Transverse colon (tissue), 4 donors: ENCODE measurements at regions of chrX and their contacts with region 1.

Region 1: GRCh38 chrX:52346512-52347194 is 22.2 kb upstream of the XAGE2 start:
- DNase-seq: no peak
- H3K4me3 ChIP-seq: no peak overlapping the region
- H3K27ac ChIP-seq: no peak overlapping the region
- H3K4me1 ChIP-seq: no peaks in the 10 kb centered on the region
- H3K27me3 ChIP-seq: no peaks in the 10 kb centered on the region
- CTCF ChIP-seq: no peak
- EP300 ChIP-seq: no peak
- POLR2A ChIP-seq: no peak

Region 2: GRCh38 chrX:52220936-52221335 is 125.7 kb before region 1 on chrX:
- in situ Hi-C with region 1: loop called in 1 of 4 experiments (anchors 25 kb)
- intact Hi-C with region 1: no loop called
- DNase-seq: no peak
- H3K4me3 ChIP-seq: no peak overlapping the region
- H3K27ac ChIP-seq: no peak overlapping the region
- H3K4me1 ChIP-seq: no peaks in the 10 kb centered on the region
- H3K27me3 ChIP-seq: no peaks in the 10 kb centered on the region
- CTCF ChIP-seq: no peak
- EP300 ChIP-seq: no peak
- POLR2A ChIP-seq: no peak

Region 3: DNA sequence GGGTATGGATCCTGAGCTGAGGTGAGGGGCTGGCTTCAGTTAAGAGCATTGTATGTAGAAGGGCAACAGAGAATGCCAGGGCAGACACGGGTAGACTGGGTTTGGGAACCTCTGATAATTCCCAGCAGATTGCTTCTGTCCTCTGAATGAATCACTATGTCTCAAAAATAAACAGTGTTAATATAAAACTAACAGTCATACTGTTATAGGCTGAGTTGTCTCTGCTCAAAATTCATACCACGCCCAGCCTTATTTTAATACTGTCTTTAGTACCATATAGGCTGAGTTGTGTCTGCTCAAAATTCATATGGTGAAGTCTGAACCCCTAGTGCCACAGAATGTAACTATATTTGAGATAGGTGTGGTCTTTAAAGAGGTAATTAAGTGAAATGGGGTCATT is 32.2 kb after region 1 on chrX:
- in situ Hi-C with region 1: no loop called
- intact Hi-C with region 1: no loop called
- DNase-seq: no peak
- H3K4me3 ChIP-seq: no peak overlapping the region
- H3K27ac ChIP-seq: no peak overlapping the region
- H3K4me1 ChIP-seq: no peaks in the 10 kb centered on the region
- H3K27me3 ChIP-seq: no peaks in the 10 kb centered on the region
- CTCF ChIP-seq: no peak
- EP300 ChIP-seq: no peak
- POLR2A ChIP-seq: no peak

Region 4: GRCh38 chrX:52608961-52609360 is 262.3 kb after region 1 on chrX:
- in situ Hi-C with region 1: no loop called
- intact Hi-C with region 1: no loop called
- DNase-seq: no peak
- H3K4me3 ChIP-seq: no peak overlapping the region
- H3K27ac ChIP-seq: no peak overlapping the region
- H3K4me1 ChIP-seq: no peaks in the 10 kb centered on the region
- H3K27me3 ChIP-seq: no peaks in the 10 kb centered on the region
- CTCF ChIP-seq: no peak
- EP300 ChIP-seq: no peak
- POLR2A ChIP-seq: no peak